ENCODE measurements at regions of chr1 and their contacts with region 1.

Region 1: GRCh38 chr1:67853704-67854103 is 20.4 kb upstream of the GNG12 start:
- DNase-seq: peak; percentile 89
- H3K4me3 ChIP-seq: no peak overlapping the region
- H3K27ac ChIP-seq: no peak overlapping the region
- H3K4me1 ChIP-seq: peaks cover 49% of the 10 kb centered on the region
- H3K27me3 ChIP-seq: no peaks in the 10 kb centered on the region
- CTCF ChIP-seq: peak; percentile 94 to 95
- POLR2A ChIP-seq: no peak

Region 2: GRCh38 chr1:67586596-67586995 is 267.1 kb before region 1 on chr1:
- CTCF ChIA-PET with region 1: no interaction called
- POLR2A ChIA-PET with region 1: no interaction called
- dilution Hi-C with region 1: no loop called
- intact Hi-C with region 1: no loop called
- DNase-seq: no peak
- H3K4me3 ChIP-seq: no peak overlapping the region
- H3K27ac ChIP-seq: no peak overlapping the region
- H3K4me1 ChIP-seq: peaks cover 3% of the 10 kb centered on the region
- H3K27me3 ChIP-seq: no peaks in the 10 kb centered on the region
- CTCF ChIP-seq: no peak
- POLR2A ChIP-seq: no peak

Region 3: GRCh38 chr1:67713057-67713846 is 140.5 kb before region 1 on chr1:
- CTCF ChIA-PET with region 1: no interaction called
- POLR2A ChIA-PET with region 1: no interaction called
- dilution Hi-C with region 1: no loop called
- intact Hi-C with region 1: no loop called
- DNase-seq: peak; percentile 92
- H3K4me3 ChIP-seq: no peak overlapping the region
- H3K27ac ChIP-seq: peak overlapping the region; percentile 64
- H3K4me1 ChIP-seq: peaks cover 45% of the 10 kb centered on the region
- H3K27me3 ChIP-seq: no peaks in the 10 kb centered on the region
- CTCF ChIP-seq: no peak
- POLR2A ChIP-seq: no peak

Region 4: GRCh38 chr1:67760030-67760821 is 93.5 kb before region 1 on chr1:
- CTCF ChIA-PET with region 1: interaction called, 108 read pairs
- POLR2A ChIA-PET with region 1: no interaction called
- dilution Hi-C with region 1: no loop called
- intact Hi-C with region 1: no loop called
- DNase-seq: peak; percentile 78
- H3K4me3 ChIP-seq: no peak overlapping the region
- H3K27ac ChIP-seq: peak overlapping the region; percentile 24
- H3K4me1 ChIP-seq: peaks cover 7% of the 10 kb centered on the region
- H3K27me3 ChIP-seq: no peaks in the 10 kb centered on the region
- CTCF ChIP-seq: peak; percentile 67 to 85
- POLR2A ChIP-seq: no peak

Region 5: GRCh38 chr1:67840449-67840848 is 13.3 kb before region 1 on chr1:
- CTCF ChIA-PET with region 1: interaction called, 18 read pairs
- POLR2A ChIA-PET with region 1: no interaction called
- dilution Hi-C with region 1: no loop called
- intact Hi-C with region 1: no loop called
- DNase-seq: peak; percentile 96
- H3K4me3 ChIP-seq: no peak overlapping the region
- H3K27ac ChIP-seq: peak overlapping the region; percentile 82
- H3K4me1 ChIP-seq: peaks cover 39% of the 10 kb centered on the region
- H3K27me3 ChIP-seq: no peaks in the 10 kb centered on the region
- CTCF ChIP-seq: no peak
- POLR2A ChIP-seq: peak; percentile 57

Region 6: DNA sequence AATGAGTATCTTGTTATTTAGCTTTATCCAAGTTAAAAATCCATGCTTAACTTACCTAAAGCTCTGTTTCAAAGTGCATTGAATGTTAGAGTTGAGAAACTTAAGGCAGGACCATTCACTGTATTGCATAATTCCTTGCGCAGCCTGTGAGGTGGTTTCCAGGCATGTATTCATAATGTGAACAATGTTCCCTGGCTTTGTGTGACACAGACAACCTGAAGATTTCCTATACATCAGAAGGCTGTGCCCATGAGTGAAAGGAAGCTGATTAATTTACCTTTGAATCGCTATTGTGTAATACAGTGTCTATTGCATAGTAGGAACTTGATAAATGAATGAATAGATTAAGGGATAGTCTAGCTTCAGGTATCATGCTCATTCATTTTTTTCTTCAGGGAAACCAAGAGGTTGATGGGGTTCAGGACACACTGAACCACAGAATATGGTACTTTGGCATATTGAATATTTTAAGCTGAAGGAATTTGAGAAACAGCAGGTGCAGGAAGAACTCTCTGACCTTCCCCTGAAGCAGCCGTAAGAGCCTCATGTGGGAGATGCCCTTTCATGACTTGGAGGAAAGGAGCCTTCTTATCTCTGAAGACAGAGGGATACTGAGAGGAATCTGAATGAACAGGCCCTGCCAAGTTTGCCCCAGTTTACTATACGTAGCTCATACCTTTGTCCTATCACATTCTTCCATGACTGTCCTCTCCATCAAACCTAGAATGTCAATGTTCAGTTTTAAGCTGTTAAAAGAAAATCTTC is 68.2 kb after region 1 on chr1:
- CTCF ChIA-PET with region 1: interaction called, 11 read pairs
- POLR2A ChIA-PET with region 1: no interaction called
- dilution Hi-C with region 1: no loop called
- intact Hi-C with region 1: no loop called
- DNase-seq: peak; percentile 96
- H3K4me3 ChIP-seq: no peak overlapping the region
- H3K27ac ChIP-seq: no peak overlapping the region
- H3K4me1 ChIP-seq: no peaks in the 10 kb centered on the region
- H3K27me3 ChIP-seq: no peaks in the 10 kb centered on the region
- CTCF ChIP-seq: no peak
- POLR2A ChIP-seq: peak; percentile 46

Region 7: DNA sequence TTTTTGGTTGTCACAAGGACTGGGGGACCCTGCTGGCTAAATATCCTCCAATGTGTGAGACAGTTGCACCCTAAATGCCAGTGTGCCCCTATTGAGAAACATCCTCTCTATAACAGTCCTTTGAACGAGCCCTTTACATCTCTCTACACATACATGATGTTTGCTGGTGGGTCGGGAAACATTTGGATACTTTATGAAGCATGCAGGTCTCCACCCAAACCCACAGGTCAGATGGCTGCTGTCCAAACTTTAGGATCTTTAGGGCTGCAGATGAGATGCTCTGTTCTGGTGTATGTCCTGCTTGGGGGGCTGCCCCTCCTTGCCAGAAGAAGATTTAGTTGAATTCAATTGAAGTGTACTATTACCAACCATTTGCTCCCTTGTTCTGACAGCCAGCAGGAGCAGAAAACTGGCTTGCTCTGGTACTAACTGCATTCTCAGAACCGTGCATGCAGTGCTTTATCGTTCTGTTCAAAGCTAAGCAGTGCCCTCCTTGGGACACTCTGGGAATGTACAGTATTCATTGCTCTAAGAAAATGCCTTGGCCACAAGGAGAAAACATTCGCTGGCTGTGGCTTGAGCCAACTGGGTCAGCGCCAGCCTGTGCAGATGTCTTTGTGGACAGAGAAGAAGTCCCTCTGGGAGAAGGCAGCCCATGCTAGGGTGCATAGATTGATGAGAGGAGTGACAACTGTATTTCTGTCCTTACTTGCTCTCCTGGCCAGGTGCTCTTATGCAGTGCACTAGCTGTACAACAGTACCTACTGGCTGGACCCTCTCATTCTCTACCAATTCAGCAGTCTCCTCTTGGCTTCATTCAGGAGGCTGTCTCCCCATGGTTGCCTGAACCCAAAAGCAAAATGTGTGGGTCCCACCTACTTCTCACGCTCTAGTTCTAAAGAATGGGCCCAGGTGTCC is 258.1 kb after region 1 on chr1:
- CTCF ChIA-PET with region 1: interaction called, 26 read pairs
- POLR2A ChIA-PET with region 1: no interaction called
- dilution Hi-C with region 1: no loop called
- intact Hi-C with region 1: loop called (anchors 1 kb)
- DNase-seq: peak; percentile 88
- H3K4me3 ChIP-seq: no peak overlapping the region
- H3K27ac ChIP-seq: no peak overlapping the region
- H3K4me1 ChIP-seq: peaks cover 8% of the 10 kb centered on the region
- H3K27me3 ChIP-seq: no peaks in the 10 kb centered on the region
- CTCF ChIP-seq: peak; percentile 68
- POLR2A ChIP-seq: no peak

Region 8: GRCh38 chr1:68232354-68233148 is 378.8 kb after region 1 on chr1 and contains the start of gene WLS:
- CTCF ChIA-PET with region 1: no interaction called
- POLR2A ChIA-PET with region 1: interaction called, 3 read pairs
- dilution Hi-C with region 1: no loop called
- intact Hi-C with region 1: loop called (anchors 5 kb)
- DNase-seq: peak; percentile 80
- H3K4me3 ChIP-seq: peak within 1 kb of the TSS; percentile 67 to 100 (median 93)
- H3K27ac ChIP-seq: peak within 1 kb of the TSS; percentile 85
- H3K4me1 ChIP-seq: peaks cover 29% of the 10 kb centered on the region
- H3K27me3 ChIP-seq: no peaks in the 10 kb centered on the region
- CTCF ChIP-seq: peak; percentile 5 to 16
- POLR2A ChIP-seq: peak; percentile 98
- total RNA-seq, gene WLS: 163 and 199 TPM in 2 replicates

Region 9: DNA sequence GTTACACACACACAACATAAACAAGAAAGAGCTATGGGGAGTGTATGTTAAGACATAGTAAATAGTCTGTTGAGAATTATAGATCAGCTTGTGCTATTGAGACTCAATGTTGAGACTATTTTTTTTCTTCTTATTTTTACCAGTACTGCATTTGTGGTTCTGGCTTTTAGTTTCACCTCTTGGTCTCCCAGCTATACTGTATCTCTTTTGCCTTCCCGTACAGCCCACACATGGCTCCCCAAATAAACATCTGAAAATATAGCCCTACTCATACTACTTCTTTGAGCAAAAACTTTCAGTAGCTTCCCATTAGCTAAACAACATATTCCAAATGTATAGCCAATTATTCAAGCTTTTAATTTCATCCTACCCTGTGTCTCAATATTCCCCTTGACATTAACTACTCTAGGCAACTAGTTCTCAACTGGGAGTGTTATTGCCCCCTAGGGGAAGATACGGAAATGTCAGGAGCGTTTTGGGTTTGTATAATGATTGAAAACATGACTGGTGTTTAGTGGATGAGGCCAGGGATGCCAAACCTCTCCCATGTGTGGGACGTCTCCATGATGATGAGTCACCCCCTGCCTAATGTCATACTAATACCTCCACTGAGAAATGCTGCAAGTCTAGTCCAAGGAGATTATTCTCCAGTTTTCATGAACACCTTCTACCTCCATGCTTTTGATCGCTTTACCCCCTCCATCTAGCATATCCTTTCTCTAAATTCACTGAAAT is 589.3 kb after region 1 on chr1:
- CTCF ChIA-PET with region 1: interaction called, 11 read pairs
- POLR2A ChIA-PET with region 1: no interaction called
- dilution Hi-C with region 1: no loop called
- intact Hi-C with region 1: loop called (anchors 2 kb)
- DNase-seq: peak; percentile 53
- H3K4me3 ChIP-seq: no peak overlapping the region
- H3K27ac ChIP-seq: no peak overlapping the region
- H3K4me1 ChIP-seq: no peaks in the 10 kb centered on the region
- H3K27me3 ChIP-seq: peaks cover 4 to 14% of the 10 kb centered on the region in 2 experiments
- CTCF ChIP-seq: peak; percentile 55 to 68
- POLR2A ChIP-seq: no peak